ENCODE measurements at regions of chr2 and their contacts with region 1.

Region 1: DNA sequence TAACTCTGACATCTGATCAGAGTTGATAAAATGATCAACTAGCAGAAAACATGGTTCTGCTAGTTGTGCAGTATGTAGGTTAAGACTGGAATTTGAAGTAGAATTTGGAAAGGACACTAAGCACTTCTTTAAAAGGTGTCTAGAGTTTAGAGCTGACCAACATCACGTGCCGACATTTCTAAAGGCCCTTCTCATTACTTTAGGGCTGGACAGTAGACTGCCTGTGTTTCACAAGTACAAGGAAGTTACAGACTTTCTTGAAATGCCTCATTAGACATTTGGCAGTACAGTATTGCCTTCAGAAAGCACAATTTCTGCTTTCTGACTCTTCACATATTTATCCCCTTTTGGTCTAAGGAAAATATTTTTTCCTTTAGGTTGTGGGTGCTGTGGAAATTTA is 255.3 kb downstream of the ZNF385B start:
- DNase-seq: no peak
- ATAC-seq: peak; percentile 75
- H3K4me3 ChIP-seq: no peak overlapping the region
- H3K27ac ChIP-seq: peak overlapping the region in 1 of 2 donors; percentile 44
- H3K4me1 ChIP-seq: no peaks in the 10 kb centered on the region
- H3K27me3 ChIP-seq: no peaks in the 10 kb centered on the region
- CTCF ChIP-seq: no peak

Region 2: GRCh38 chr2:179709040-179709439 is 102.9 kb after region 1 on chr2:
- intact Hi-C with region 1: loop called in 1 of 2 experiments (anchors 5 kb)
- DNase-seq: no peak
- ATAC-seq: no peak
- H3K4me3 ChIP-seq: no peak overlapping the region
- H3K27ac ChIP-seq: no peak overlapping the region
- H3K4me1 ChIP-seq: no peaks in the 10 kb centered on the region
- H3K27me3 ChIP-seq: no peaks in the 10 kb centered on the region
- CTCF ChIP-seq: no peak